Aorta (tissue), 5 donors: ENCODE measurements at regions of chr1 and their contacts with region 1.

Region 1: DNA sequence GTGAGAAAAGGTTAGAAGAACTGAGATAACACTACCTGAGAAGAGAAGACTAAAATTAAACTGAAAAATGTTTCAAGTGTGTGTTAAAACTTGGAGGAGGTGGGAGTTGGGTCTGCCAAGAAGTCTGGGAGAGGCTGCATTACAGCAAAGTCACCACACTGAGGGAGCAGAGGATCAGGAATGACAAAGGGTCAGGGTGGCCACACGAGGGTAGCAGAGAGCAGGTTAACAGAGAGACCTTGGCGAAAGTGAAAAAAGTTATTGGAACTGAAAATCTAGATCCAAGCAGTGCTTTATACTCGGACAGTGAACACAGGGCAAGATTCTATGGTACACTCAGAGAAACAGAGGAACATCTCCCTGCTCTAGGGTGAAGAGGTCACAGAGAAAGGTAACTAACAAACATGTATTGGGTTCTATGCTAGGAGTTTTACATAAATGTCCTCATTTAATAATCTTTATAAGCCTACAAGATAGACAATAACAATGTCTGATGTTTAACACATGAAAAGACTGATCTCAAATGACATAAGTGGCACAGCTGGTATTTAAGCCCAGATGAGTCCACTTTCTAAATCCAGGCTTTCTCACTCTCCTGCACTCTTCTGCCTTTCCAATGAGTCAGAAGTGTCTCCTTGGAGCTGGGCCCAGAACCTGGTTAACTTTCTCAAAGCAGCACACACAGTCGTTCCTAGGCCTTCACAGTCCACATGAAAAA is 10.3 kb upstream of the CADM3 start:
- DNase-seq: peak; percentile 82 to 85
- ATAC-seq: peak; percentile 97
- H3K4me3 ChIP-seq: no peak overlapping the region
- H3K27ac ChIP-seq: no peak overlapping the region
- H3K4me1 ChIP-seq: no peaks in the 10 kb centered on the region
- H3K27me3 ChIP-seq: no peaks in the 10 kb centered on the region

Region 2: DNA sequence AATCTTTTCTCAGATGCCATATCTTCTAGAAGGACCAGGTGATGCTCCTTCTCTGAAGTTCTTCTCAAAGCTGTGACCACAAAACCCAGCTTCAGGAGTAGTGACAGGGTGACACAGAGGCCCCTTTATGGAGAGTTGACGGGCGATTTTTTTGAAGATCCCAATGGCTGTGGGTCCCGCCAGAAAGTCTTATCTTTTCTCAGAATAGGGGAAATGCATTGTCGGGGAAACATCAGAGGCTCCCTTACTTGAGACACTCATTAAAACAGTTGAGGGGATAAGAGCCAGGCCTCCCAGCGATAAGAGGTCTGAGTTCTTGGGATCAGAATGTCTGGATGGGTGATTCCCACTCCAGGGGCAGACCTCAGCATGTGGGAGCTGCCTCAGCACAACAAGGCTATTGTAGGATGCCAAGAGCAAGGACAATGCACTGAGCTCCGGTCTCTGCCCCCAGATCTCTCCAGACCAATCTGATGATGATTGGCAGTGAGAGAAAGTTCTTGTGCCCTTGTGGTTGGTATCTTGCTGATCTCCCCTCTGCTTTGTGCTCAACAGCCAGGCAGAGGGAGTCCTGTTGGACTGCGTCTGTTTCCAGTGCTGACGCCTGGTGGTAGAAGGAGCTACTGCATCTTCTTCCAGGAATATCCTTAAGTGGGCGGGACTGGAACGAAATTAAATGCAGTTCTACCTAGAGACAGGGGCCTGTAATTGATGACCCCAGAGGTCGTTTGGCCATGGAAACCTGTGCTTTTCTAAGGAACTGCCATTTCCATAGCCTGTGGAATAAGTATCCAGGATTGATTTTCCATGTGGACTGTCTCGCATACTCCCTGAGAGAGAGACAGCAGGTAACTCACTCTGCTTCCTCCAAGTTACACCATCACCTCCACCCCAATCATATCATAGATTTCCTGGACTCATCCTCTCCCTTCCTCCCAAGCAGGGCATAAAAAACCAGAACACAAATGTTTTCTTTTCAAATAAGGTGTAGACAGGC is 36.7 kb after region 1 on chr1:
- intact Hi-C with region 1: loop called (anchors 2 to 5 kb)
- DNase-seq: peak in 1 of 2 donors; percentile 75
- ATAC-seq: peak; percentile 73
- H3K4me3 ChIP-seq: no peak overlapping the region
- H3K27ac ChIP-seq: no peak overlapping the region
- H3K4me1 ChIP-seq: no peaks in the 10 kb centered on the region
- H3K27me3 ChIP-seq: no peaks in the 10 kb centered on the region

Region 3: GRCh38 chr1:159214149-159214760 is 53.1 kb after region 1 on chr1:
- intact Hi-C with region 1: loop called (anchors 5 kb)
- DNase-seq: no peak
- ATAC-seq: peak; percentile 73
- H3K4me3 ChIP-seq: no peak overlapping the region
- H3K27ac ChIP-seq: no peak overlapping the region
- H3K4me1 ChIP-seq: no peaks in the 10 kb centered on the region
- H3K27me3 ChIP-seq: no peaks in the 10 kb centered on the region